Right ventricle myocardium inferior (tissue), 1 donor: ENCODE measurements at regions of chr1 and their contacts with region 1.

Region 1: GRCh38 chr1:203273206-203273868 is 32.0 kb upstream of the BTG2 start:
- DNase-seq: peak; percentile 93
- ATAC-seq: peak; percentile 66

Region 2: GRCh38 chr1:203069030-203069747 is 204.1 kb before region 1 on chr1:
- intact Hi-C with region 1: no loop called
- DNase-seq: no peak
- ATAC-seq: peak; percentile 88

Region 3: GRCh38 chr1:203304919-203305808 is 31.8 kb after region 1 on chr1 and contains the start of gene BTG2:
- intact Hi-C with region 1: loop called (anchors 1 kb)
- DNase-seq: peak; percentile 96
- ATAC-seq: peak; percentile 94
- total RNA-seq, gene BTG2: 44.8 TPM

Region 4: GRCh38 chr1:203316626-203317093 is 43.3 kb after region 1 on chr1:
- intact Hi-C with region 1: no loop called
- DNase-seq: no peak
- ATAC-seq: peak; percentile 60

Region 5: GRCh38 chr1:203326830-203327683 is 53.7 kb after region 1 on chr1:
- intact Hi-C with region 1: loop called (anchors 2 kb)
- DNase-seq: peak; percentile 97
- ATAC-seq: peak; percentile 86

Region 6: GRCh38 chr1:203486618-203487370 is 213.5 kb after region 1 on chr1:
- intact Hi-C with region 1: loop called (anchors 1 kb)
- DNase-seq: no peak
- ATAC-seq: peak; percentile 34